Head of caudate nucleus (tissue), 42 donors: ENCODE measurements at regions of chr16 and their contacts with region 1.

Region 1: DNA sequence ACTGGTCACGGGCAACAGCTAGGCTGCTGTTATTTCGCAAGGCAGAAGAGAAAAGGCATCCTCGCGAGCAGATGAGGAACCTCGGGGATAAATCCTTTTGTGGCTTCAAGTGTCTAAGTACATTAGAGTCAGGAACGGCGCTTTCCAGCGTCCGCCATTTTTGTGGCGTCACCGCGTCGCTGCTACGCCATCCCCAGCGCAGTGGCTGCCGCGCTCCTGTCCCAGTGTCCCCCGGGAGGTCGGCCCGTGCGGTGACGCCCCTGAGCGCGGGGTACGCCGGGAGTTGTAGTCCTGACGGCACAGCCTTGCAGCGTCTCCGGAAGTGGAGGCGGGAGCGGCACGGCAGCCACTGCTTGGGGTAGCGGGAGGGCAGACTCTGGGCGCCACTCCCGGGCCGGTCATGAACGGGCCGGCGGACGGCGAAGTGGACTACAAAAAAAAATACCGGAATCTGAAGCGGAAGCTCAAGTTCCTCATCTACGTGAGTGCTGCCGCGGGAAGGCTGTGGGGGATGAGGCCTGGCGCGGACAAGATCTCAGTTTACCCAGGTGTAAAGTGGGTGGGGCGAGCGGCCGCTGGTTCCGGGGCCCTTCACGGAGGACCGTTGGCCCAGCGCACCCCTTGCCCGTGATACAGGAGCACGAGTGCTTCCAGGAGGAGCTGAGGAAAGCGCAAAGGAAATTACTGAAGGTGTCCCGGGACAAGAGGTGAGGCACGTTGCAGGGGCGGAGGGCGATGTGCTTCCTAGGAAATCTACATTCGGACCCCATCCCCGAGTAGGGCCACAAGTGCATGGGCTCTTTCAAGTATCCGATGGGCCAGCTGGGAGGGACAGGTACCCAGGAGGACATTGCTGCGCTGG is at the start of gene INO80E:
- DNase-seq: peak; percentile 97 to 100 (median 100)

Region 2: DNA sequence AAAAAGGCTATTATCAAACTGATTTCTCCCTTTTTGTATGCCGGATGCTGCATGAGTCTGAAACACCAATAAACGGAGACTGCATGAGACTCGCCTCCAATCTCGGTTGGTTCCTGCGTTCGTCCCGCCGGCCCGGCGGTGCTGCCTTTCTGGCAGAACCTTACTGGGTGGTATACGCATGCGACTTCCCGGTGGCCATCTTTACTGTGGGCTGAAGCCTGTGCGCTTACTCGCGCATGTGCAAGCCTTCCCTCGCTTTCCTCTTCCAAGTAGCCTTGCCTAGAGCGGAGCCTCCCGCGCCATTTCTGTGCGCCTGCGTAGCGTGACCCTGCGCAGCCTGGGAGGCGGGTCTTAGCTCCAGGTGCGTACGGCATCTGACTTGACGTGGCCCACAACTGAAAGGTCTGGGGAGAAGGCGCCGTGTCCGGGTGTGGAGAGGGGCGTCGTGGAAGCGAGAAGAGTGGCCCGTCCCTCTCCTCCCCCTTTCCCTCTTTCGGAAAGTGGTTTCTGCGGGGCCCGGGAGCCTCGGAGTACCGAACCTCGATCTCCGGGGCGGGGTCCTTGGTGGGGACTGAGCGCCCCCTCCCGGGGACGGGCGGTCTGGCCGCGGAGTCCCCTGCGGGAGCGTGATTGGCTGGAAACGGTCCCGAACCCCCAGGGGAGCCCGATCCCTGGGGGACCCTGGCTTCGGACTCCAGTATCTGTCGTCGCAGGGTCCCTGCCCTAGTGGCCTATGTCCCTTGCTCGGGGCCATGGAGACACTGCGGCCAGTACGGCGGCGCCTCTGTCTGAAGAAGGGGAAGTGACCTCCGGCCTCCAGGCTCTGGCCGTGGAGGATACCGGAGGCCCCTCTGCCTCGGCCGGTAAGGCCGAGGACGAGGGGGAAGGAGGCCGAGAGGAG is 180.1 kb before region 1 on chr16 and contains the start of gene PAGR1:
- intact Hi-C with region 1: loop called (anchors 10 kb)
- DNase-seq: peak; percentile 92 to 99 (median 98)

Region 3: DNA sequence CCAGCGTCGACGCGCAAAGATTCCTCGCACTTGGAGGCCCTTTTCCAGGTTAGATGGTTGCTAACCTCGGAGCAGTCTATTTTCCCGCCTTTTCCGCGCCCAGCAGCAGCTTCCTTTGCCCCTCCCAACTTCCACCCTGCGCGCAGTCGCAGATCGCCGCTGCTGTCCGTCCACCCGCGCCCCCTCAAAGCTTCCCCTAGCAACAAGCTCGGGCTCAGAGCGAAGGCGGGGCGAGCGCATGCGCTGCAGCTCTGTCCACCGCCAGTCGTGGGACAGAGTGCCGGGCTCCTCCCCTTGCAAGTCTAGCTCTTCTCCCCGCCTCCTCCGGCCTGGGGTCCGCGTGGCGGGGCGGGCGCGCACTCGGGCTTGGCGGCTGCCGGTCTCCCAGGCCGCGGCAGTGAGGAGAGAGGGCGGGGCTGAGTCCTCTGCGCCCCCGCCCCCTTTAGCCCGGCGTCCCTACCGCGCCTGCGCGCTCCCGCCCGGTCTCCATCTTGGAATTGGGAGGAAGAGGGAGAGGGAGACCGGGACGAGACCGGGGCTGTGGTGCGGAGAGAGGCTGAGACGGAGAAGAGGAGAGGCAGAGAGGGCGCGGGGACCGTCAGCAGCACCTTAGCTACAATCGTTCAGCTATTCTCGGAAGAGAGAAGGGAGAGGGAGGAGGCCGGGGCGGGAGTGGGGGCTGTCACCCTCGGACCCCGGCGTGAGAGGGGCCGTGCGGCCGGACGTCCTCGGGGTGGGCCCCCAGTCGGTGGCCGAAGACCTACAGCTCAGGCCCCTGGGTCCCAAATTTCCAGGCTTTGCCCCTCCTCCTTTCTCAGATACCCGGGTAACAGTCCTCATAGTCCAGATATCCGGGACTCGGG is 22.5 kb before region 1 on chr16 and contains the start of gene TAOK2:
- intact Hi-C with region 1: loop called (anchors 2 kb)
- DNase-seq: peak; percentile 95 to 99 (median 98)

Region 4: GRCh38 chr16:30041846-30042267 is 45.7 kb after region 1 on chr16:
- intact Hi-C with region 1: no loop called
- DNase-seq: peak in 1 of 42 donors; percentile 53

Region 5: GRCh38 chr16:30052671-30053372 is 56.7 kb after region 1 on chr16:
- intact Hi-C with region 1: loop called (anchors 10 kb)
- DNase-seq: peak; percentile 79 to 98 (median 93)